MCF 10A (cell line): ENCODE measurements at regions of chr4 and their contacts with region 1.

Region 1: GRCh38 chr4:47668810-47669408 is 169.0 kb downstream of the CORIN start:
- DNase-seq: peak; percentile 64
- H3K4me3 Mint-ChIP-seq: no peak overlapping the region
- H3K27ac Mint-ChIP-seq: no peak overlapping the region
- H3K4me1 Mint-ChIP-seq: peaks cover 5% of the 10 kb centered on the region
- H3K27me3 Mint-ChIP-seq: no peaks in the 10 kb centered on the region
- CTCF ChIP-seq: peak; percentile 72

Region 2: DNA sequence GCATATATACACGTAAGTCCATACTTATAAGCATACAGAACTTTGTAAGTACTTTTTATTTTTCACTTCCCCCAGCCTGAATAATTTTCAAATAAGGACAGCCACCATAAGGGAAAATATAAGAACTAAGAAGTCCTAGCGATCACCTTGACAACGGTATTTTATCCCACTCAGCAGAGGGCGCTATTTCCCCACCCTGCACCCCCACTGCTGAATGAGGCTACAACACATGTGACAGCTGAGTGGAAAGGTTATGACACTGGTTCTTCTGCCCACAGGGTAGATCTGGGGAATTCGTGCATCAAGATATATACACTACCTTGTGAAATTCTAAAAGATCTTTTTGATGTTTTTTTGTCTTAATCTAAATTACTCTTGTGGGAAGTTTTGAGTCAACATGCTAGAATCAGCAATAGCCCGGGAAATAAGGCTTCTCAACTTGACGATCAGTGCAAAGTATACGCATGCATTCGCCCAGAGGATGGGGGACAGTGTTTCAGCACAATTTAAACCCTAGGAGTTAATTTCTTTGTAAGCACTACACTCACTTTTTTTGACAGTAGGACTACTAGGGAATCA is 17.5 kb after region 1 on chr4:
- CTCF ChIA-PET with region 1: interaction called, 18 read pairs
- POLR2A ChIA-PET with region 1: interaction called, 3 read pairs
- intact Hi-C with region 1: no loop called
- DNase-seq: peak; percentile 62
- H3K4me3 Mint-ChIP-seq: no peak overlapping the region
- H3K27ac Mint-ChIP-seq: no peak overlapping the region
- H3K4me1 Mint-ChIP-seq: no peaks in the 10 kb centered on the region
- H3K27me3 Mint-ChIP-seq: no peaks in the 10 kb centered on the region
- CTCF ChIP-seq: peak; percentile 61

Region 3: DNA sequence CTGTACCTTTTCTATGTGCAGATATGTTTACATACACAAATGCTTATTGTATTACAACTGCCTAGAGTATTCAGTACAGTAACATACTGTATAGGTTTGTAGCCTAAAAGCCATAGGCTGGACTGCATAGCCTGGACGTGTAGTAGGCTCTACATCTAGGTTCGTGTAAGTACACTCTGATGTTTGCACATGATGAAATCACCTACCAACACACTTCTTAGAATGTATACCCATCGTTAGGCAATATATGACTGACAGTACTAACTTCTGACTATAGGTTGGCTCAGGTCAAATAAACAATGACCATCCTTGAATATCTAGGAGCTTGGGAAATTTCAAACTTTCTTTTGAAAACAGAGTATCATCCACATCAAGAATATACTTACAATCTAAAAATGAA is 29.9 kb after region 1 on chr4:
- CTCF ChIA-PET with region 1: interaction called, 11 read pairs
- POLR2A ChIA-PET with region 1: interaction called, 3 read pairs
- intact Hi-C with region 1: no loop called
- DNase-seq: peak; percentile 10
- H3K4me3 Mint-ChIP-seq: no peak overlapping the region
- H3K27ac Mint-ChIP-seq: no peak overlapping the region
- H3K4me1 Mint-ChIP-seq: peaks cover 5% of the 10 kb centered on the region
- H3K27me3 Mint-ChIP-seq: no peaks in the 10 kb centered on the region
- CTCF ChIP-seq: no peak

Region 4: DNA sequence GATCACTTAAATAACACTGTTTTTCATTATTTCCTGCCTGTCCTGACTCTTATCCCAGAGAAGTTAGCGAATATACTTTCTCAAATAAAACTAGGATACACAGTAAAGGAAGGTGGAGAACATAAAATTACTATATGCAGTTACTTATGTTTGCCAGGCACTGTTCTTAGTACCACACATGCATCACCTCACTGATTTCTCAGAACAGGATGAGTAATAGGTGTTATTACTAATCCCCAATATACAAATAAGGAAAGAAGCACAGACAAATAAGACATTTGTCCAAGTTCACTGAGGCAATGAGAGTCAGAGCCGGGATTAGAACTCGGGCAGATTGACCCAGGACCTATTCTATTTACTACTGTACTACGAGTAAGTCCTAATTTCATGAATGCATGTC is 77.2 kb after region 1 on chr4:
- CTCF ChIA-PET with region 1: no interaction called
- POLR2A ChIA-PET with region 1: no interaction called
- intact Hi-C with region 1: no loop called
- DNase-seq: peak; percentile 4
- H3K4me3 Mint-ChIP-seq: no peak overlapping the region
- H3K27ac Mint-ChIP-seq: no peak overlapping the region
- H3K4me1 Mint-ChIP-seq: peaks cover 8% of the 10 kb centered on the region
- H3K27me3 Mint-ChIP-seq: no peaks in the 10 kb centered on the region
- CTCF ChIP-seq: no peak

Region 5: DNA sequence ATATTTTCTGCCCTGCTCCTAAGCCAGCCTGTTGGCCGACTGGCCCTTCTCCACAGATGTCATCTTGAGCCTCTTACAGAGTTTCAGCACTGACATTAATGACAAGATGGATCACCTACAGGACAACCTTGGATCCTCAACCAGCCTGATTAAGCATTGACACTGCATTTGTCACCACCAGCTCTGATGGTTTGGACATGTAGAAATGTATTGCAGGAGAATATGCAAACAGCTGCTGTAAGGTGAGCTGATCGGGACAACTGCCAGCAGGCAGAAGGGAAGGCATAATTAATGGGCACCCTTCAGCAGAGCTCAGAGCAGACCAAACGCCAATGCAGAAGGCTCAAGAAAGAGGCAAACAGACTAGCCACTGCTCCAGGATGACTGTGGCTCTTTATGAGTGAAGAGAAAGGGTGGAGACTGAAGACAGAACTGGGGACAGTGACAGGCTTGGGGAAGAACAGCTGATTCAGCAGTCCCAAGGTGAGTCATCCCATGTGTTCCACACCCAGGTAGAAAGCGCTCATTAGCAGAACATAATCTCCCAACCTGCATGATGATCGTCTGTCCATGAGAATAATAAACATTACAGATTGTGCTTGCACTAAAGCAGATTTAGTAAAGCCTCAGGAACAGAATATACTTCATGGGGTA is 162.2 kb after region 1 on chr4:
- CTCF ChIA-PET with region 1: interaction called, 102 read pairs
- POLR2A ChIA-PET with region 1: interaction called, 10 read pairs
- intact Hi-C with region 1: loop called (anchors 1 kb)
- DNase-seq: peak; percentile 18
- H3K4me3 Mint-ChIP-seq: no peak overlapping the region
- H3K27ac Mint-ChIP-seq: no peak overlapping the region
- H3K4me1 Mint-ChIP-seq: peaks cover 13% of the 10 kb centered on the region
- H3K27me3 Mint-ChIP-seq: no peaks in the 10 kb centered on the region
- CTCF ChIP-seq: no peak